ENCODE measurements at regions of chr6 and their contacts with region 1.

Region 1: GRCh38 chr6:35342258-35343091 is at the start of gene PPARD:
- DNase-seq: peak; percentile 97
- H3K4me3 Mint-ChIP-seq: peak within 1 kb of the TSS; percentile 82
- H3K27ac Mint-ChIP-seq: peak within 1 kb of the TSS; percentile 95
- H3K4me1 Mint-ChIP-seq: peaks cover 18% of the 10 kb centered on the region
- H3K27me3 Mint-ChIP-seq: peaks cover 12% of the 10 kb centered on the region
- CTCF ChIP-seq: peak; percentile 95
- total RNA-seq, gene PPARD: 13.8 and 16.8 TPM in 2 replicates

Region 2: GRCh38 chr6:35259948-35260590 is 82.4 kb before region 1 on chr6:
- CTCF ChIA-PET with region 1: no interaction called
- POLR2A ChIA-PET with region 1: no interaction called
- intact Hi-C with region 1: no loop called
- DNase-seq: peak; percentile 65
- H3K4me3 Mint-ChIP-seq: peak overlapping the region; percentile 88
- H3K27ac Mint-ChIP-seq: peak overlapping the region; percentile 98
- H3K4me1 Mint-ChIP-seq: peaks cover 39% of the 10 kb centered on the region
- H3K27me3 Mint-ChIP-seq: no peaks in the 10 kb centered on the region
- CTCF ChIP-seq: no peak

Region 3: GRCh38 chr6:35402136-35402855 is 59.8 kb after region 1 on chr6:
- CTCF ChIA-PET with region 1: interaction called, 3 read pairs
- POLR2A ChIA-PET with region 1: interaction called, 14 read pairs
- intact Hi-C with region 1: no loop called
- DNase-seq: no peak
- H3K4me3 Mint-ChIP-seq: no peak overlapping the region
- H3K27ac Mint-ChIP-seq: no peak overlapping the region
- H3K4me1 Mint-ChIP-seq: peaks cover 15% of the 10 kb centered on the region
- H3K27me3 Mint-ChIP-seq: no peaks in the 10 kb centered on the region
- CTCF ChIP-seq: no peak

Region 4: GRCh38 chr6:35415065-35415991 is 72.9 kb after region 1 on chr6:
- CTCF ChIA-PET with region 1: interaction called, 9 read pairs
- POLR2A ChIA-PET with region 1: interaction called, 5 read pairs
- intact Hi-C with region 1: loop called (anchors 1 kb)
- DNase-seq: peak; percentile 79
- H3K4me3 Mint-ChIP-seq: no peak overlapping the region
- H3K27ac Mint-ChIP-seq: peak overlapping the region; percentile 2
- H3K4me1 Mint-ChIP-seq: peaks cover 4% of the 10 kb centered on the region
- H3K27me3 Mint-ChIP-seq: no peaks in the 10 kb centered on the region
- CTCF ChIP-seq: peak; percentile 56

Region 5: DNA sequence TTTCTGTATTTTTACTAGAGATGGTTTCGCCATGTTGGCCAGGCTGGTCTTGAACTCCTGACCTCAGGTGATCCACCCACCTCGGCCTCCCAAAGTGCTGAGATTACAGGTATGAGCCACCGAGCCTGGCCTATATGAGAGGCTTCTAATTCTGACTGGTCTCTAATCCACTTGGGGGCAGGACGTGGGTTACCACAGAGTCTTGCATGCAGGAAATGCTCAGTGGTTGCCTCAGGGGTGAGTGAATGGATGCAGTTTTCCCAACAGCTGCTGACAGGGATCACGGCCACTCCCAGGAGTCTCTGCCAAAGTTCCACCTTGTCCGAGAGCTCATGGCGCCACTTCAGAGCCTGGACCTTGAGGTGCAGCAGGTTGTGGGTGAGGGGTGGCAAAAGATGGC is 103.2 kb after region 1 on chr6:
- CTCF ChIA-PET with region 1: interaction called, 146 read pairs
- POLR2A ChIA-PET with region 1: interaction called, 41 read pairs
- intact Hi-C with region 1: loop called (anchors 1 kb)
- DNase-seq: peak; percentile 60
- H3K4me3 Mint-ChIP-seq: no peak overlapping the region
- H3K27ac Mint-ChIP-seq: no peak overlapping the region
- H3K4me1 Mint-ChIP-seq: no peaks in the 10 kb centered on the region
- H3K27me3 Mint-ChIP-seq: no peaks in the 10 kb centered on the region
- CTCF ChIP-seq: no peak

Region 6: DNA sequence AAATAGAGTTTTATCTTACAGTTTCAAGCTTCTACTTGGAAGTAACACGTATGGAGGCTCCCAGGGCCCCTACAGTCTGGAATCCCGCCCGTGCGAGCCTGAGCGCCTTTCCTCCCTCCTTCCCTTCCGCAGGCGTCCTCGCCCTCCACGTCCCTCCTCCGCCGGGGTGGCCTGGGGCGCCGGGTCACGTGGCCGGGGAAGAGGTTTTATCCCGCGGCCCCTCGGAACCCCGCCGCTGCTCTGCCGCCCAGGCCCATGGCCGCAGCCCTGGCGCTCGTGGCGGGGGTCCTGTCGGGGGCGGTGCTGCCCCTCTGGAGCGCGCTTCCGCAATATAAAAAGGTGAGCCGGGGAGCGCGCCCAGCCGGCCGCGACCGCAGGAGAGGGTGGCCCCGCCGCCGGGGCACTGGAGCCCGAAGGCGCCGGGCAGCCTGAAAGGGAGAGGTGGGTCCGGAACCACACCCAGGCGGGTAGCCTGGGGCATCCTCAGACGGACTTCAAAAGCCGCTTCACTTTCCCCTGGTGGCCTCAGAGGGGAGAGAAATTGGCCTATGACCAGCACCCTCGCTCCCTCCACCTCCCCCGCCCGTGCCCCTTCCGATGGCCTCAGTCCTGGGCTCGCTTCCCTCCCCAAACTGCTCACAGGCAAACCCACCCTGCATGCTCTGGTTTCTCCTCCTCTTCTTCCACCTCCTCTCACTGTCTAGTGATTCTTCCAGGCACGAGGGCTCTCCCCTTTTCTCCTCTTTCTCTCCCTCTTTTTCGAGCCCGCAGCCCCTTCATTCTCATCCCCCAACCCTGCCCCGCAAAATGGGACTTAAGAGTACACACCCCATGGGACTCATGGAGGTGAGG is 434.1 kb after region 1 on chr6 and contains the start of gene CLPSL2:
- CTCF ChIA-PET with region 1: no interaction called
- POLR2A ChIA-PET with region 1: no interaction called
- intact Hi-C with region 1: no loop called
- DNase-seq: no peak
- H3K4me3 Mint-ChIP-seq: peak within 1 kb of the TSS; percentile 59
- H3K27ac Mint-ChIP-seq: no peak within 1 kb of the TSS
- H3K4me1 Mint-ChIP-seq: peaks cover 25% of the 10 kb centered on the region
- H3K27me3 Mint-ChIP-seq: peaks cover 13% of the 10 kb centered on the region
- CTCF ChIP-seq: no peak
- total RNA-seq, gene CLPSL2: not detected in 2 replicates

Measured in MCF 10A (cell line).